ENCODE measurements at regions of chr5 and their contacts with region 1.

Region 1: GRCh38 chr5:135024956-135025729 is 8.9 kb downstream of the PITX1 start:
- DNase-seq: no peak
- H3K4me3 Mint-ChIP-seq: no peak overlapping the region
- H3K27ac Mint-ChIP-seq: no peak overlapping the region
- H3K4me1 Mint-ChIP-seq: peaks cover 5% of the 10 kb centered on the region
- H3K27me3 Mint-ChIP-seq: peaks cover 49% of the 10 kb centered on the region

Region 2: DNA sequence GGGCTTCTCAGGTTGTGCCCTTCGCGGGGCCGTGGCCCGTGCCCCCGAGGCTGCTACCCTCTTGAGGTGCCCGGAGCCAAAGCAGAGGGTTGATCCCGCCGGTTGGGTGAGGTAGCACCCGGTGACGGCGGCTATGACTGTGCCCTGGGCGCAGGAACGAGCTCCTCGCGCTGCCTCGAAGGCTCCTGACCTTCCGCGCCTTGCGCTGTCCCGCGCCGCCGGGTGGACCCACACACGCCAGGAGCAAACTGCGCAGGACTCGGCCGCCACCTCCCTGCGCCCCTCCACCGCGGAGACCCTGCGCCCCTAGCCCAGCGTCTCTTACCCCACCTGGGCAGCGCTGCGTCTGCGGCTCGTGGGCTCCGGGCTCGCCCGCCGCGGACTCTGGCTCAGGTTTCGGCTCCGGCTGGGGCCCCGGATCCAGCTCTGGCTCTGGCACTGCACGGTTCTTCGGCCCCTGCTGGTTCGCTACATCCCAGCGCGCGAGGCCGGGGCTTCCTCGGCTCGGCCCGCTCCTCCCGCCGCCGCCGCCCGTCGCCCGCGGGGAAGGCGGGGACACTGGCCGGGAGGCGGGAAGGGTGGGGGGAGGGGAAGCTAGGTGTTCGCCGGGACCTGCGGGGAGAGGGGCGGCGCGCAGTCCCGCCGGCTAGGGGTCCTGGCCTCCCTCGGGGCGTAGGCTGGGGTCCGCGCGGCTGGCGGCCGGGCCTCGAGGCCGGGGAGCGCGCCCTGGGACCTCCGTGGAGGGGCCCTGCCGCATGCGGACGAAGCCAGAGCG is 14.3 kb after region 1 on chr5:
- intact Hi-C with region 1: loop called (anchors 2 kb)
- DNase-seq: no peak
- H3K4me3 Mint-ChIP-seq: no peak overlapping the region
- H3K27ac Mint-ChIP-seq: no peak overlapping the region
- H3K4me1 Mint-ChIP-seq: peaks cover 2% of the 10 kb centered on the region
- H3K27me3 Mint-ChIP-seq: peaks cover 83% of the 10 kb centered on the region

Region 3: DNA sequence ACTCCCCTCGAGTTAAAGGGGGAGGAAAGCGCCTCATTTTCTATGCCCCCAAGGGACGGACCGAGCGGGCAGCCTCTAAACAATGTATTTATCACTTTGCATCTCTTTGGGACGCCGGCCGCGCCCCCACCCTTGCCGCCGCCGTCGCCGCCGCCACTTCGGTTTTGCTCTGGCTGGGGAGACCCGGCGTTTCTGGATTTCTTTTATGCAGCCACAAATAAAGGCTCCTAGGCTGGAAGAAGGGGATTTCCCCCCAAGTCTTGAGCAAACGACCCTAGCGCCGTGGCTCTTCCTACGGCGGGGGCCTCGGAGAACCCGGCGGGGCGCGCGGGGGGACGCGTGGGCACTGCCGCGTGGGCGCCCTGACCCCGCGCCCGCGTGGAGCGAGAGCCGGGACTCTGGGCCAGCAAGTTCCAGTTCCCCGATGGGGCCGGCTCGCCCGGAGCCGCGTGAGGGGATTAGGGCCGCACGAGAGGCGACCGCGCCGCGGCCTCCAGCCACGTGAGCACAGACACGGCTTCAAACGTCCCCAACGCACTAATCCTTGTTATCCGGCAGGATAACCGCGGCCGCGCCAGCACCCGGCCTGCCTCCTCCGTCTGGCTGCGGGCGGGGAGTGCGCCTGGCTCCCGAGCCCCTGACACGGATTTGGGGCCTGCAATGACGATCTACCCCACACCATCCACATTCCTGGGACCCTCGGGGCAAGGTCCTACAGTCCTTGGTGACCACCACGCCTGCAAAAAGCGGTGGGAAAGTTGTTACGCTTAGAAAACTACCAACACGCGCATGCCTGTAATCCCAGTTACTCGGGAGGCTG is 518.6 kb after region 1 on chr5:
- intact Hi-C with region 1: loop called (anchors 5 kb)
- DNase-seq: no peak
- H3K4me3 Mint-ChIP-seq: peak overlapping the region; percentile 67
- H3K27ac Mint-ChIP-seq: no peak overlapping the region
- H3K4me1 Mint-ChIP-seq: peaks cover 8% of the 10 kb centered on the region
- H3K27me3 Mint-ChIP-seq: peaks cover 87% of the 10 kb centered on the region

Measured in activated T-helper 2 cell treated with anti-CD3 and anti-CD28 coated beads, Interferon-gamma antibody, Interleukin-2, Interleukin-4, amounts not matched to agents 10 μg/mL and 5 μg/mL and 100 μg/mL, durations not matched to agents 14 hours and 24 hours and 36 hours (primary cell).